Endothelial cell of umbilical vein (primary cell): ENCODE measurements at regions of chr3 and their contacts with region 1.

Region 1: DNA sequence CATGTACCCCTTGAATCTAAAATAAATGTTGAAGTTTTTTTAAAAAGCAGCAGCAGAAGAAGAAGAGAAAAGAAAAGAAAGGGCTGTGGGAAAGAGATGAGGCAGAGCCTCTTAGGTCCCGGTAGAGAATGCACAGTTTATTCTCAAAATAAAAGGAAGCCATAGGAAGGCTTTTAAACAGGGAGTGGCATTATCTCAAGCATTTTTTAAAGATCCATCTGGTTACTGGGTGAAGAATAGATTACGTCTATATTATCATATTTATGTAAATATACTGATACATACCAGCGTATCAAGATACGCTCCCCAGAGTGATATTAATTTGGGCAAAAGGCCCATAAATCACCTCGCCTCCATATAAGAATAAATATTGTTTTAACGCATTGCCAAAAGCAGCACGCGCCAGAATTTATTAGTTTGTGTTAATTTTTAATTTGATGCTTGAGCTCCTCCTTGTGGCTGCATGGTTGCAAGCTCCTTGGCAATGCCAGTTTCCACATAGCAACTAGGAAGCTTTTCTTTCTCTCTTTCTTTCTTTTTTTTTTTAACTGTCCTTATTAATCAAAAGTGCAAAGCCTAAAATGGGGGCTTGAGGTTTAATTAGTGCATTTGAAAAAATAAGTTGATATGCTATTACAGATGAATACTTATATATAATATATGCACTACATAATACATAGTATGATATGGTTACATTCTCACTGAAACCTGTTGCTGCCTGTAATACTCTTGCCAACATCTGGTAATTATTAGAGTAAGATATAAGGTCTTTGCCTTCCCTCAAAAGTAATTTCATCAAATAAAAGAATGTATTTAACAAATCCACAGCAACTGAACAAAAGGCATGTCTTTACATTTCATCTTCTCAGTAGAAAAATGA is 242.8 kb upstream of the UBE2E2 start:
- DNase-seq: peak; percentile 47
- H3K4me3 ChIP-seq: no peak overlapping the region
- H3K27ac ChIP-seq: no peak overlapping the region
- H3K4me1 ChIP-seq: peaks cover 9% of the 10 kb centered on the region
- H3K27me3 ChIP-seq: peaks cover 0 to 2% of the 10 kb centered on the region in 2 experiments
- CTCF ChIP-seq: peak; percentile 55 to 65
- POLR2A ChIP-seq: no peak

Region 2: GRCh38 chr3:22089284-22089683 is 871.1 kb before region 1 on chr3:
- CTCF ChIA-PET with region 1: interaction called, 28 read pairs
- POLR2A ChIA-PET with region 1: no interaction called
- dilution Hi-C with region 1: no loop called
- intact Hi-C with region 1: no loop called
- DNase-seq: peak; percentile 6
- H3K4me3 ChIP-seq: no peak overlapping the region
- H3K27ac ChIP-seq: no peak overlapping the region
- H3K4me1 ChIP-seq: no peaks in the 10 kb centered on the region
- H3K27me3 ChIP-seq: no peaks in the 10 kb centered on the region
- CTCF ChIP-seq: peak in 1 of 2 donors; percentile 30
- POLR2A ChIP-seq: no peak

Region 3: DNA sequence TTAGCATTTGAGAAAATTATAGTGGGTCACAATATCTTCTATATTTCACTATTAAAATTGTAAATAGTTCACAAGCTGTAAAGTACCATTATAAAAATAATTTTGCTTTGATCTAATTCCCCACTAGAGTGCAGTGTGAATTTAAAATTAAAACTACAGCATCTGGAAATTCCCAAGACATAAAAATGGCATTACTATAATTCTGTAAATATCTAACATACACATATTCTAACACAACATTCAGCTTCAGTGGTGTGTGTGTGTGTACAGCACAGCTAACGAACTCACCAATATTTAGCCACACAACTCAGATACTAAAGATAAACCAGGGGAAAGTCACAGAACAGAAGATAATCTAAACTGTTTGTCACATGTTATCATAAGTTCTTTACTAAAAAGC is 784.4 kb before region 1 on chr3:
- CTCF ChIA-PET with region 1: interaction called, 24 read pairs
- POLR2A ChIA-PET with region 1: no interaction called
- dilution Hi-C with region 1: no loop called
- intact Hi-C with region 1: loop called (anchors 2 kb)
- DNase-seq: no peak
- H3K4me3 ChIP-seq: no peak overlapping the region
- H3K27ac ChIP-seq: no peak overlapping the region
- H3K4me1 ChIP-seq: no peaks in the 10 kb centered on the region
- H3K27me3 ChIP-seq: no peaks in the 10 kb centered on the region
- CTCF ChIP-seq: no peak
- POLR2A ChIP-seq: no peak

Region 4: GRCh38 chr3:22565393-22565792 is 395.0 kb before region 1 on chr3:
- CTCF ChIA-PET with region 1: interaction called, 119 read pairs
- POLR2A ChIA-PET with region 1: no interaction called
- dilution Hi-C with region 1: no loop called
- intact Hi-C with region 1: no loop called
- DNase-seq: no peak
- H3K4me3 ChIP-seq: no peak overlapping the region
- H3K27ac ChIP-seq: no peak overlapping the region
- H3K4me1 ChIP-seq: no peaks in the 10 kb centered on the region
- H3K27me3 ChIP-seq: no peaks in the 10 kb centered on the region
- CTCF ChIP-seq: no peak
- POLR2A ChIP-seq: no peak

Region 5: GRCh38 chr3:22887664-22888291 is 72.6 kb before region 1 on chr3:
- CTCF ChIA-PET with region 1: interaction called, 15 read pairs
- POLR2A ChIA-PET with region 1: no interaction called
- dilution Hi-C with region 1: no loop called
- intact Hi-C with region 1: no loop called
- DNase-seq: peak; percentile 4
- H3K4me3 ChIP-seq: no peak overlapping the region
- H3K27ac ChIP-seq: no peak overlapping the region
- H3K4me1 ChIP-seq: no peaks in the 10 kb centered on the region
- H3K27me3 ChIP-seq: no peaks in the 10 kb centered on the region
- CTCF ChIP-seq: peak in 1 of 2 donors; percentile 17
- POLR2A ChIP-seq: no peak

Region 6: DNA sequence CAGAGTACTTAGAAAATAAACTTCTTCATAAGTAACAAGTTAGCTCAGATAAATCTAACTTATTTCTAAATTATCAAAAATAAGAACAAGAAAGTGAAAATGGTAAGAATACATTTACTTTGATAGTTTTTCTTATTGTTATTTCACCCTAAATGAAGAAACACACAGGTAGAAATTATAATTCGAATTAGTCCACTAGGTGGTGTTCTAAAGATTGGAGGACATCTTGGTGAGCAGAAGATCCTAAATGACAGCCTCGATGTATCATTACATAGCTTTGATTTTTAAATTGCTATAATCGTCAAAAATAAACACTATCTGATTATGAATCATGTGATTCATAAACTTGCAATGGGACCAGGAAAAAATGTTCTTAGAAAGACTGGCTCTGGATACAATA is 38.0 kb before region 1 on chr3:
- CTCF ChIA-PET with region 1: interaction called, 20 read pairs
- POLR2A ChIA-PET with region 1: no interaction called
- dilution Hi-C with region 1: no loop called
- intact Hi-C with region 1: loop called (anchors 2 kb)
- DNase-seq: peak; percentile 6
- H3K4me3 ChIP-seq: no peak overlapping the region
- H3K27ac ChIP-seq: no peak overlapping the region
- H3K4me1 ChIP-seq: peaks cover 13% of the 10 kb centered on the region
- H3K27me3 ChIP-seq: no peaks in the 10 kb centered on the region
- CTCF ChIP-seq: no peak
- POLR2A ChIP-seq: no peak

Region 7: GRCh38 chr3:22942981-22943380 is 17.4 kb before region 1 on chr3:
- CTCF ChIA-PET with region 1: interaction called, 19 read pairs
- POLR2A ChIA-PET with region 1: no interaction called
- dilution Hi-C with region 1: no loop called
- intact Hi-C with region 1: no loop called
- DNase-seq: no peak
- H3K4me3 ChIP-seq: no peak overlapping the region
- H3K27ac ChIP-seq: no peak overlapping the region
- H3K4me1 ChIP-seq: no peaks in the 10 kb centered on the region
- H3K27me3 ChIP-seq: no peaks in the 10 kb centered on the region
- CTCF ChIP-seq: no peak
- POLR2A ChIP-seq: no peak

Region 8: DNA sequence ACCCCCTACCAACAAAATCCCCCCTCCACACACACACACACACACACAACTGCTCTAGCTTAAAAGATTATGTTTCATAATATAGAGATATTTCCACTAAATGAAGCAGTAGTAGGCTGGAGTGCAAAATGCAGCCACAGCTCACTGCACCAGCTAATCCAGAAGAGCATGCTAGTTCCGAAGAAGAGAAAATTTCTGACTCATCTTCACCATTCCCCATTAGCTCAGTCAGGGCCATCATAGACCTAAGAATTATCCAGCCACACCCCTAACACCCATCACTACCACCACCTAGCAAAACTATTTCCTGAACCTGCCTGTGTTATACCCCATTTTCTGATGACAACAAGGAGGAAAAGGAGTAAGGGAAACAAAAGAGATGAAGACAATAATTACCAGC is 175.7 kb after region 1 on chr3:
- CTCF ChIA-PET with region 1: no interaction called
- POLR2A ChIA-PET with region 1: no interaction called
- dilution Hi-C with region 1: no loop called
- intact Hi-C with region 1: no loop called
- DNase-seq: no peak
- H3K4me3 ChIP-seq: no peak overlapping the region
- H3K27ac ChIP-seq: no peak overlapping the region
- H3K4me1 ChIP-seq: no peaks in the 10 kb centered on the region
- H3K27me3 ChIP-seq: peaks cover 0 to 1% of the 10 kb centered on the region in 2 experiments
- CTCF ChIP-seq: no peak
- POLR2A ChIP-seq: no peak